ENCODE measurements at regions of chr9 and their contacts with region 1.

Region 1: GRCh38 chr9:71604197-71605063 is 163.9 kb downstream of the CEMIP2 start:
- DNase-seq: peak; percentile 31 to 86
- H3K4me3 ChIP-seq: no peak overlapping the region
- H3K27ac ChIP-seq: no peak overlapping the region
- H3K4me1 ChIP-seq: peaks cover 0 to 5% (median 2%) of the 10 kb centered on the region in 4 experiments; a peak in 3 of 7 replicates
- H3K27me3 ChIP-seq: no peaks in the 10 kb centered on the region
- CTCF ChIP-seq: peak; percentile 59 to 82 (median 81)
- EP300 ChIP-seq: no peak
- POLR2A ChIP-seq: no peak
- RAD21 ChIP-seq: peak; percentile 81 to 88

Region 2: DNA sequence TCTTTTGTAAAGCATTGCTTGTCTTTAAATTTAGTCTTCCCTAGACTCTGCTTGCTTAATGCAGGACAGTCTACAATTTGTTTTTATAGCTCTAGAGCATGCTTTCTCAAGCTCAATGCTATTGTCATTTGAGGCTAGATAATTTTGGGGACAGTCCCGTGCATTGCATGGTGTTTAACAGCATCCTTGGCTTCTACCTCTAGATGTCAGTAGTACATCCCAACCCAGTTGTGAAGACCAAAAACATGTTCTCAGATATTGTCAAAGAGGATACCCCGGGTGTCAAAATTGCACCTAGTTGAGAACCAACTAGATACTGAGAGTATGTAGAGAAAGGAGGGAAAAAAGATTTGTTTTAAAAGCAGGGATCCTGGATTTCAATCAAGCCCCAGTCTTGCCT is 113.6 kb before region 1 on chr9:
- CTCF ChIA-PET with region 1: interaction called, 11 read pairs
- POLR2A ChIA-PET with region 1: no interaction called
- DNase-seq: no peak
- H3K4me3 ChIP-seq: no peak overlapping the region
- H3K27ac ChIP-seq: no peak overlapping the region
- H3K4me1 ChIP-seq: no peaks in the 10 kb centered on the region
- H3K27me3 ChIP-seq: no peaks in the 10 kb centered on the region
- CTCF ChIP-seq: peak in 2 of 3 experiments; percentile 24 to 53; a peak in 2 of 4 replicates
- EP300 ChIP-seq: no peak
- POLR2A ChIP-seq: no peak
- RAD21 ChIP-seq: peak; percentile 58 to 68

Region 3: GRCh38 chr9:71614409-71615010 is 10.1 kb after region 1 on chr9:
- CTCF ChIA-PET with region 1: interaction called, 19 read pairs
- POLR2A ChIA-PET with region 1: interaction called, 3 read pairs
- DNase-seq: no peak
- H3K4me3 ChIP-seq: no peak overlapping the region
- H3K27ac ChIP-seq: no peak overlapping the region
- H3K4me1 ChIP-seq: peaks cover 0 to under 1% (median 0%) of the 10 kb centered on the region in 4 experiments; a peak in 1 of 7 replicates
- H3K27me3 ChIP-seq: no peaks in the 10 kb centered on the region
- CTCF ChIP-seq: no peak
- EP300 ChIP-seq: no peak
- POLR2A ChIP-seq: no peak
- RAD21 ChIP-seq: no peak

Region 4: DNA sequence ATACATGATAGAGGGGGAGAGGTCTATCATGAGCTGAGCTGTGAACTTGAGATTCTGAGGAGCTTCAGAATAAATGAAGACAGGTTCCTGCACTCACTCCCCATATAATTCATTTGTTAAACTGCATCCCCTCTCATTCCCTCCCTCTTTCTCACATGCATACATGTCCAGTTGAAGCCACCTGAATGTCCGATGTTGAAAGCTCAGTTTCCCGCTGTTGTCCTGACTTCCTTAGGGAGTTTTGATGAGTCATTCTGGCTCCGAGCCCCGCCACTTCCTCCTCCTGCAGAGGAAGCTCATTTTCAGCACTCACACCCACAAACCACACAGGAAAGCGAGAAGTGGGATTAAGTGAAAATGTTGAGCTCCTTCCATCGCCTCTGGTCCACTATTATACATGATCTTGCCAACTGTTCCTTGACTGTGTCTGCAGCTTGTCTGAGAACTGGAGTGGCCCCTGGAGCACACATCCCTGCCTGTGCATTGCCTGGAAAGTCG is 42.7 kb after region 1 on chr9:
- CTCF ChIA-PET with region 1: interaction called, 12 read pairs
- POLR2A ChIA-PET with region 1: no interaction called
- DNase-seq: no peak
- H3K4me3 ChIP-seq: no peak overlapping the region
- H3K27ac ChIP-seq: no peak overlapping the region
- H3K4me1 ChIP-seq: peaks cover 0 to 5% (median 0%) of the 10 kb centered on the region in 4 experiments; a peak in 1 of 7 replicates
- H3K27me3 ChIP-seq: no peaks in the 10 kb centered on the region; a peak in 1 of 7 replicates
- CTCF ChIP-seq: no peak
- EP300 ChIP-seq: no peak
- POLR2A ChIP-seq: no peak
- RAD21 ChIP-seq: no peak

Region 5: DNA sequence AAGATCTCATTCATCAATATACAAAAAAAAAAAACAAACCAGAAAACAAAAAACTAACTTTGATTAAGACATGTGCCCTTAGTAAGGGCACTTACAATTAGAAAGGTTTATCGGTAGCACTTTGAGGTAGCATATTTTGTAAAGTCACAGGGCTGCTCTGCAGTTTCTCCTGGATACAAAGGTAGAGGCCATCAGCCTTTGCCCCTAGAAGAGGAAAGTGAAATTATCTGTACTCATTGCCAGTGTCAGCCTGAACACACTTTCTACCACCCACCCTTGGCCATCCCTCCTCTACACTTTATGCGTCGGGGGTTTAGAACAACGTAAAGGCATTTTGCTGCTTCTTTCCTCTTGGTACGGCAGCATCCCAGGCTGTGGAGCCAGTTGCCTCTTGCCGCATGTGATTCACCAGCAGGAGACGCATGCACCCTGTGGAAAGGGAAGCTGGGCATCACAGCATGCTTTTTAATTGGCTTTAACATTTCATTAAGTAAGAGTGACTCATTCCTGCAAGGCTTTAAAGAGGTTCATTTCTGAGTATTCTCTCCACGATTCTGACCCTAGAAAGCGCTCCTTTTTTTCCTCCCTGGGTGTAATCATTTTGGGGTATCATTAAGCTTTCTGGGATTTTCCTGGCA is 79.3 kb after region 1 on chr9:
- CTCF ChIA-PET with region 1: interaction called, 22 read pairs
- POLR2A ChIA-PET with region 1: interaction called, 3 read pairs
- DNase-seq: peak; percentile 51 to 55
- H3K4me3 ChIP-seq: 0 out of 8 replicates have a peak overlapping the region, but pooled peaks of 1 of the 4 experiments have one; percentile 0
- H3K27ac ChIP-seq: no peak overlapping the region; the same call in 1 of the 2 replicates
- H3K4me1 ChIP-seq: peaks cover 0 to 8% (median 5%) of the 10 kb centered on the region in 4 experiments; a peak in 5 of 7 replicates
- H3K27me3 ChIP-seq: no peaks in the 10 kb centered on the region
- CTCF ChIP-seq: peak; percentile 25 to 68 (median 65); a peak in 3 of 4 replicates
- EP300 ChIP-seq: no peak
- POLR2A ChIP-seq: no peak
- RAD21 ChIP-seq: peak; percentile 67 to 73

Region 6: GRCh38 chr9:71737455-71737854 is 133.0 kb after region 1 on chr9:
- CTCF ChIA-PET with region 1: no interaction called
- POLR2A ChIA-PET with region 1: no interaction called
- DNase-seq: no peak
- H3K4me3 ChIP-seq: no peak overlapping the region
- H3K27ac ChIP-seq: no peak overlapping the region
- H3K4me1 ChIP-seq: no peaks in the 10 kb centered on the region
- H3K27me3 ChIP-seq: no peaks in the 10 kb centered on the region
- CTCF ChIP-seq: no peak
- EP300 ChIP-seq: no peak
- POLR2A ChIP-seq: no peak
- RAD21 ChIP-seq: no peak

Measured in H1 (cell line).